BJ (cell line): ENCODE measurements at regions of chr7 and their contacts with region 1.

Region 1: GRCh38 chr7:47991741-47992311 is 12.4 kb upstream of the HUS1 start:
- DNase-seq: no peak
- H3K4me3 ChIP-seq: peak overlapping the region; percentile 54
- H3K27me3 ChIP-seq: no peaks in the 10 kb centered on the region
- CTCF ChIP-seq: peak; percentile 83

Region 2: GRCh38 chr7:47979145-47979831 is 12.5 kb before region 1 on chr7 and contains the start of gene HUS1:
- CTCF ChIA-PET with region 1: interaction called, 10 read pairs
- POLR2A ChIA-PET with region 1: no interaction called
- DNase-seq: peak; percentile 33
- H3K4me3 ChIP-seq: peak within 1 kb of the TSS; percentile 74
- H3K27me3 ChIP-seq: no peaks in the 10 kb centered on the region
- CTCF ChIP-seq: no peak
- polyA plus RNA-seq, gene HUS1: 14.1 and 23.7 TPM in 2 replicates

Region 3: GRCh38 chr7:48011323-48011722 is 19.5 kb after region 1 on chr7:
- CTCF ChIA-PET with region 1: interaction called, 12 read pairs
- POLR2A ChIA-PET with region 1: no interaction called
- DNase-seq: no peak
- H3K4me3 ChIP-seq: no peak overlapping the region
- H3K27me3 ChIP-seq: peaks cover 3% of the 10 kb centered on the region; the same call in 1 of the 2 replicates
- CTCF ChIP-seq: no peak

Region 4: GRCh38 chr7:48094751-48095562 is 103.1 kb after region 1 on chr7:
- CTCF ChIA-PET with region 1: interaction called, 10 read pairs
- POLR2A ChIA-PET with region 1: no interaction called
- DNase-seq: no peak
- H3K4me3 ChIP-seq: no peak overlapping the region
- H3K27me3 ChIP-seq: no peaks in the 10 kb centered on the region
- CTCF ChIP-seq: no peak

Region 5: GRCh38 chr7:48101968-48102367 is 110.1 kb after region 1 on chr7:
- CTCF ChIA-PET with region 1: interaction called, 112 read pairs
- POLR2A ChIA-PET with region 1: no interaction called
- DNase-seq: no peak
- H3K4me3 ChIP-seq: no peak overlapping the region
- H3K27me3 ChIP-seq: no peaks in the 10 kb centered on the region
- CTCF ChIP-seq: peak; percentile 22; the same call in 1 of the 2 replicates

Region 6: DNA sequence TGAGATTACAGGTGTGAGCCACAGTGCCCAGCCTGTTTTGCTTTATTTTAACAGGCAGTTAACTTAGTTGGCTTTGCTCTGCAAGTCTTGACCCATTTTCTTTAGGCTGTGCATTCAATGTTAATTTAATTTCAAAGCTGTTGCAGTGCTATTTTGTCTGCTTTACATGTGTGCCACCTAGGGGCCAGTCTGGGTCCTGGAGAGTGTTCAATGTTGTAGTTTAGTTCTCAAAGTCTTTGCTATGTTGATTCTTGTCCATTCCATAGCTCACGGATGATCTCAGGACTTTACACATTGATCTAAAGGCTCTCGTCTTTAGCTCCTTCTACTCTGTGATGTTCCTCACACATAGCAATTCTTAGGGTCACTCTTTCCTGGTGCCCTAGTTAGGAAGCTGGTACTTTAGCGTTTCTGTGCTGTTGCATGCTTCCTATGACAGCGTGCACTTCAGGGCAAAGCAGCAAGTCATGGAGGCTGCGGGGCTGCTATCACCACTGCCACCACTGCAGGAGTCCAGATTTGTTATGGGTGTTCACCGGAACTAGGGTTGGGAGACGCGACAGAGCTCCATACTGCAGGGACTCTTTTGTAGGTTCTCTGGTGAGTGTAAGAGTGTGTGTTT is 163.1 kb after region 1 on chr7:
- CTCF ChIA-PET with region 1: interaction called, 43 read pairs
- POLR2A ChIA-PET with region 1: no interaction called
- DNase-seq: no peak
- H3K4me3 ChIP-seq: no peak overlapping the region
- H3K27me3 ChIP-seq: no peaks in the 10 kb centered on the region
- CTCF ChIP-seq: peak; percentile 87